ENCODE measurements at regions of chr11 and their contacts with region 1.

Region 1: DNA sequence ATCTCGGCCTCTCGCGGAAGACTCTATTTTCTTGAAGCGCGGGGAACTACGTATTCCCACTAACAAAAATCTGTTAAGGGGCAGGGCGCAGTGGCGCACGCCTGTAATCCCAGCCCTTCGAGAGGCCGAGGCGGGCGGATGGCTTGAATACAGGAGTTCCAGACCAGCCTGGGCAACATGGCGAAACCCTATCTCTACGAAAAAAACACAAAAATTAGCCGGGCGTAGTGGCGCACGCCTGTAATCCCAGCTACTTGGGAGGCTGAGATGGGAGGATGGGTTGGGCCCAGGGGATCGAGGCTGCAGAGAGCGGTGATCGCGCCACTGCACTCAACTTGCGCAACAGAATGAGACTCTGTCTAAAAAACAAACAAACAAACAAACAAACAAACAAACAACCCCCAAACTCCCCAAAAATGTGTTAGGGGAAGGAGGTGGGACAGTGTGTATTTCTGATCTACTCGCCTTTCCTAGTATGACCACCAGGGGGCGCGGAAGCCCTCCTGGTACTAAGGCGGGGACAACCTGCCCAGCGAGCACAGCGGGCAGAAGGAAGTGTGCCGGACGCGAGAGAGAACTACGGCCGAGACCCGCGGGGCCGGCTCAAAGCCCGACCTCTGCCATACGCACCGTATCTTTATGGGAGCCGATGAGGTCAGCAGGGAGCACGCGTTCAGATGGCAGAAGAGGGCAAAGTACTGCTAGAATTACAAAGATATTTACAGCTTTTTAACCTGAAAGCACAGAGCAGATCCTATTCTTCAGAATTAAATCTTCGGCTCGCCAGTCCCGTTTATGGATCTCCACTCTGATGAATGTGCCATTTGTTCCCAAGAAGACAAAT is 1.3 kb upstream of the STX3 start:
- DNase-seq: peak; percentile 90
- H3K4me3 Mint-ChIP-seq: peak overlapping the region; percentile 94
- H3K27ac Mint-ChIP-seq: peak overlapping the region; percentile 48
- H3K4me1 Mint-ChIP-seq: peaks cover 9% of the 10 kb centered on the region
- H3K27me3 Mint-ChIP-seq: peaks cover 4% of the 10 kb centered on the region

Region 2: GRCh38 chr11:59550368-59550841 is 203.5 kb before region 1 on chr11:
- CTCF ChIA-PET with region 1: no interaction called
- intact Hi-C with region 1: loop called (anchors 5 kb)
- DNase-seq: peak; percentile 93
- H3K4me3 Mint-ChIP-seq: peak overlapping the region; percentile 79
- H3K27ac Mint-ChIP-seq: peak overlapping the region; percentile 93
- H3K4me1 Mint-ChIP-seq: peaks cover 27% of the 10 kb centered on the region
- H3K27me3 Mint-ChIP-seq: peaks cover 5% of the 10 kb centered on the region

Region 3: GRCh38 chr11:59668950-59669610 is 84.8 kb before region 1 on chr11 and contains the start of gene PATL1:
- CTCF ChIA-PET with region 1: no interaction called
- intact Hi-C with region 1: loop called (anchors 1 kb)
- DNase-seq: peak; percentile 99
- H3K4me3 Mint-ChIP-seq: peak within 1 kb of the TSS; percentile 87
- H3K27ac Mint-ChIP-seq: peak within 1 kb of the TSS; percentile 91
- H3K4me1 Mint-ChIP-seq: peaks cover 37% of the 10 kb centered on the region
- H3K27me3 Mint-ChIP-seq: no peaks in the 10 kb centered on the region
- total RNA-seq, gene PATL1: 56.7 to 56.8 TPM

Region 4: GRCh38 chr11:59802639-59803176 is 48.8 kb after region 1 on chr11:
- CTCF ChIA-PET with region 1: interaction called, 66 read pairs
- intact Hi-C with region 1: loop called (anchors 1 kb)
- DNase-seq: peak; percentile 53
- H3K4me3 Mint-ChIP-seq: no peak overlapping the region
- H3K27ac Mint-ChIP-seq: no peak overlapping the region
- H3K4me1 Mint-ChIP-seq: no peaks in the 10 kb centered on the region
- H3K27me3 Mint-ChIP-seq: no peaks in the 10 kb centered on the region

Region 5: DNA sequence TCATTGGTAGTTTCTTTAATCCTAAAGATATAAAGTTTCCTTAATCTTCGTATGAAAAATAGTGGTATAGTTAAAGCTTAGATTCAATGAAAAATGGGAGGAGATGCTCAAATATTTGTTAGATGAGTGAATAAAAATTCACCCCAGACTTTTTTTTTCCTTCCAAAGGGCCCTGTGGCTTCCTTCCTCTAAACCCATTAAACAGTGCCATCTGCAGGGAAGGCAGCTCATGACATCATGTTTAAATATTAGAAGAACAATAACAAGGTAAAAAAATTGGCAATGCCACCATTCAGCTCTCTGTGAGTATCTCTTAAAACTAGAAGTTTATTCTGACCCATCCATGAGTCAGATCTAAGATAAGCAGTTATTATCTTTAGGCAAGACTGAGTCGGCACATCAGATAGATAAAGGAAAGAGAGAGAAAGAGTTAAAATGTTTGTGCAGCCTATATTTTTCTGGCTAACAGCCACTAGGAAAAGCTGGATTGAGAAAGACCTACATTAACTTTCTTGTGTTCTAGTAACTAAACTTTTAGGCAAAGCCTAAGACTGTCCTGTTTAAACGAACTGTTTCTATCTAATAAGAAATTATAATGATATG is 165.2 kb after region 1 on chr11:
- CTCF ChIA-PET with region 1: interaction called, 5 read pairs
- intact Hi-C with region 1: loop called (anchors 1 kb)
- DNase-seq: peak; percentile 46
- H3K4me3 Mint-ChIP-seq: no peak overlapping the region
- H3K27ac Mint-ChIP-seq: no peak overlapping the region
- H3K4me1 Mint-ChIP-seq: no peaks in the 10 kb centered on the region
- H3K27me3 Mint-ChIP-seq: peaks cover 4% of the 10 kb centered on the region

Region 6: GRCh38 chr11:60193687-60194433 is 440.0 kb after region 1 on chr11:
- CTCF ChIA-PET with region 1: no interaction called
- intact Hi-C with region 1: loop called (anchors 1 kb)
- DNase-seq: peak; percentile 79
- H3K4me3 Mint-ChIP-seq: no peak overlapping the region
- H3K27ac Mint-ChIP-seq: no peak overlapping the region
- H3K4me1 Mint-ChIP-seq: peaks cover 6% of the 10 kb centered on the region
- H3K27me3 Mint-ChIP-seq: peaks cover 17% of the 10 kb centered on the region

Measured in activated naive CD4-positive, alpha-beta T cell treated with anti-CD3 and anti-CD28 coated beads for 36 hours (primary cell).